ENCODE measurements at regions of chr5 and their contacts with region 1.

Region 1: GRCh38 chr5:139670369-139671095 is 22.4 kb downstream of the CXXC5 start:
- DNase-seq: peak; percentile 65
- ATAC-seq: peak; percentile 61
- H3K4me3 Mint-ChIP-seq: peak overlapping the region; percentile 86
- H3K27ac Mint-ChIP-seq: peak overlapping the region; percentile 92
- H3K4me1 Mint-ChIP-seq: peaks cover 92% of the 10 kb centered on the region
- H3K27me3 Mint-ChIP-seq: no peaks in the 10 kb centered on the region
- CTCF ChIP-seq: no peak

Region 2: GRCh38 chr5:139446956-139447779 is 223.4 kb before region 1 on chr5:
- CTCF ChIA-PET with region 1: no interaction called
- POLR2A ChIA-PET with region 1: no interaction called
- intact Hi-C with region 1: no loop called
- DNase-seq: no peak
- ATAC-seq: no peak
- H3K4me3 Mint-ChIP-seq: no peak overlapping the region
- H3K27ac Mint-ChIP-seq: no peak overlapping the region
- H3K4me1 Mint-ChIP-seq: no peaks in the 10 kb centered on the region
- H3K27me3 Mint-ChIP-seq: no peaks in the 10 kb centered on the region
- CTCF ChIP-seq: no peak

Region 3: DNA sequence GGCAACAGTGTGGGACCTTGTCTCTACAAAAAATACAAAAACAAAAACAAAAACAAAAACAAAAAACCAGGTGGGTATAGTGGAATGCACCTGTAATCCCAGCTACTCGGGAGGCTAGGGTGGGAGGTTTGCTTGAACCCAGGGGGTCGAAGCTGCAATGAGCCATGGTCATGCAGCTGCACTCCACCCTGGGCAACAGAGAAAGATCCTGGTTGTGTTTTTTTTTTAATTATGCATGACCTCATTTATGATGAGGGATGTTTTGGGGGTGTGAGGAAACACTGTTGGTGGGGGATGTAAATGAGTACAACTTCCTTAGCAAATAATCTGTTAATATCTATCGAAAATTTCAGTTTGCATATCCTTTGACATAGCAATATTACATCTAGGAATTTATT is 138.8 kb before region 1 on chr5:
- CTCF ChIA-PET with region 1: no interaction called
- POLR2A ChIA-PET with region 1: no interaction called
- intact Hi-C with region 1: no loop called
- DNase-seq: no peak
- ATAC-seq: no peak
- H3K4me3 Mint-ChIP-seq: no peak overlapping the region
- H3K27ac Mint-ChIP-seq: no peak overlapping the region
- H3K4me1 Mint-ChIP-seq: peaks cover 6% of the 10 kb centered on the region
- H3K27me3 Mint-ChIP-seq: no peaks in the 10 kb centered on the region
- CTCF ChIP-seq: no peak

Region 4: GRCh38 chr5:139619861-139620260 is 50.7 kb before region 1 on chr5:
- CTCF ChIA-PET with region 1: no interaction called
- POLR2A ChIA-PET with region 1: no interaction called
- intact Hi-C with region 1: no loop called
- DNase-seq: no peak
- ATAC-seq: no peak
- H3K4me3 Mint-ChIP-seq: no peak overlapping the region
- H3K27ac Mint-ChIP-seq: no peak overlapping the region
- H3K4me1 Mint-ChIP-seq: no peaks in the 10 kb centered on the region
- H3K27me3 Mint-ChIP-seq: no peaks in the 10 kb centered on the region
- CTCF ChIP-seq: no peak

Region 5: GRCh38 chr5:139684881-139685749 is 14.6 kb after region 1 on chr5:
- CTCF ChIA-PET with region 1: interaction called, 19 read pairs
- POLR2A ChIA-PET with region 1: interaction called, 31 read pairs
- intact Hi-C with region 1: loop called (anchors 1 kb)
- DNase-seq: no peak
- ATAC-seq: no peak
- H3K4me3 Mint-ChIP-seq: no peak overlapping the region
- H3K27ac Mint-ChIP-seq: peak overlapping the region; percentile 74
- H3K4me1 Mint-ChIP-seq: peaks cover 69% of the 10 kb centered on the region
- H3K27me3 Mint-ChIP-seq: no peaks in the 10 kb centered on the region
- CTCF ChIP-seq: no peak

Region 6: DNA sequence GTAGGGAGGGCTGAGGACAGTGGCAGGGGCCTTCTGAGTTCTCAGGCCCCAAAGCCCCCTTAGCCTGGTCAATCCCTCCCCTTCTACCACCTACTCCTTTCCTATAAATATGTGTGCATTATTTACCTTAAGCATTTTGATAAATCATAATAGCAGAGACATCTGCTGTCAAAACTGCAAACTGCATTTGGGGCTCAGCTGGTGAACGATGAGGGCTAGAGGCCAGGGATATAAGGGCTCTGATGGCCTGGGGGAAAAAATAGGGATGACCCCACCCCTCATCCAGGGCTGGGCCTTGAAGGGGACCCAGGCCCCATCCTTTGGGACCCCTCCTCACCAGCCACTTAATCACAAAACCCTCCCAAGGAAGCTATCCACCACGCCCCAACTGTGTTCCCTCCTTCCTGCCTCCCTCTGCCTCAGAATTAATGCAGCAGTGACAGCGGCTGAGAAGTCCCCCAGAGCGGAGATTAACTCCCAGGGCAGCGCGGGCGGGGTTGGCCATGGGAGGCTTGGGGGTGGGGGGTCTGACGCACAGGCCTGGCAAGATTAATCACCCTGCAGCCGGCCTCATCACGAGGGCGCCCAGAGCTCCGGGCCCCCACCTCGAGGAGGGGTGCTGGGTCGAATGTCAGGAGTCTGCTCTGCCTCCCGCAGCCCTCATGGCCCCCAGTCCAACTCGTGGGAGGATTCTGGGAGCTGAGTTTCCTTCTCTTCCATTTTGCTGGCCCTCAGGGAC is 19.7 kb after region 1 on chr5:
- CTCF ChIA-PET with region 1: interaction called, 19 read pairs
- POLR2A ChIA-PET with region 1: interaction called, 31 read pairs
- intact Hi-C with region 1: loop called (anchors 1 kb)
- DNase-seq: no peak
- ATAC-seq: peak; percentile 56
- H3K4me3 Mint-ChIP-seq: no peak overlapping the region
- H3K27ac Mint-ChIP-seq: peak overlapping the region; percentile 67
- H3K4me1 Mint-ChIP-seq: peaks cover 53% of the 10 kb centered on the region
- H3K27me3 Mint-ChIP-seq: no peaks in the 10 kb centered on the region
- CTCF ChIP-seq: peak; percentile 19